Motor neuron (in vitro differentiated cells): ENCODE measurements at regions of chr13 and their contacts with region 1.

Region 1: GRCh38 chr13:28505641-28506051 is 10.7 kb upstream of the FLT1 start:
- ATAC-seq: no peak
- H3K4me3 ChIP-seq: no peak overlapping the region
- H3K27ac ChIP-seq: no peak overlapping the region
- H3K4me1 ChIP-seq: peaks cover 0 to 4% of the 10 kb centered on the region in 2 donors

Region 2: GRCh38 chr13:27035982-27036981 is 1469.4 kb before region 1 on chr13:
- in situ Hi-C with region 1: no loop called
- ATAC-seq: peak; percentile 45 to 95 (median 74)
- H3K4me3 ChIP-seq: no peak overlapping the region
- H3K27ac ChIP-seq: no peak overlapping the region
- H3K4me1 ChIP-seq: peaks cover 0 to 6% of the 10 kb centered on the region in 2 donors

Region 3: DNA sequence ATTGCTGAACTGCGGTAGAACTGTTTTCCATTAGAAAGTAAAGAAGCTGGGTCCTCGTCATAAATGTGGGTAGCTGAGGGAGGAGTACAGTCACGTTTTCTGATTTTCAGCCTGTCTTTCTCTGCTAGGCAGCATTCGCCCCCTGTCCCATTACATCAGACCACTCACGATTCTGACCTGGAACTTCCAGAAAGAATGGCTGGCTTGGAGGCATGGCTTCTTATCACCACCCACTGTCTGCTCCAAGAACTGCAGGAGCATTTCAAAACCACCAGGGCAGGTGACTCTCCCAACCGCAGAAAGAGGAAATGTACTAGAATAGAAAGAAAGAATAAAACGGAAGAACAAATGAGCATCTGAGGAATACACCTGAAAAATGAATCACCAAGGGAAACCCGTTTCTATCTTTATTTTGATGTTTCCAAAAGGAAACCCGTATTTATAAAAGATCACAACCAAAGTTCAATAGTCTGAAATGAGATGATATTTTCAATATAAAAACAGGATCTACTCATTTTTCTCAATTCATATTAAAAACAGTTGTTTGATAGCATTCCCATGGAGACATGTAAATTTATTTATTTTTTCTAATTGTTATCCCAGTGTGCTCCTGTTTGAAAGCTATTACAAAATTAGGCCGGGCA is 131.2 kb after region 1 on chr13:
- in situ Hi-C with region 1: loop called in 1 of 9 experiments (anchors 25 kb)
- ATAC-seq: peak in 4 of 8 experiments; percentile 75 to 88 (median 86)
- H3K4me3 ChIP-seq: no peak overlapping the region
- H3K27ac ChIP-seq: no peak overlapping the region
- H3K4me1 ChIP-seq: no peaks in the 10 kb centered on the region